Testis (tissue), 5 donors: ENCODE measurements at regions of chr1 and their contacts with region 1.

Region 1: GRCh38 chr1:197733324-197733723 is 42.0 kb downstream of the DENND1B start:
- DNase-seq: no peak
- H3K4me3 ChIP-seq: no peak overlapping the region
- H3K27ac ChIP-seq: no peak overlapping the region
- H3K4me1 ChIP-seq: no peaks in the 10 kb centered on the region
- H3K27me3 ChIP-seq: no peaks in the 10 kb centered on the region
- CTCF ChIP-seq: no peak
- POLR2A ChIP-seq: no peak

Region 2: GRCh38 chr1:196677781-196678509 is 1055.4 kb before region 1 on chr1:
- intact Hi-C with region 1: no loop called
- DNase-seq: no peak
- H3K4me3 ChIP-seq: no peak overlapping the region
- H3K27ac ChIP-seq: no peak overlapping the region
- H3K4me1 ChIP-seq: no peaks in the 10 kb centered on the region
- H3K27me3 ChIP-seq: no peaks in the 10 kb centered on the region
- CTCF ChIP-seq: no peak
- POLR2A ChIP-seq: no peak

Region 3: GRCh38 chr1:197683895-197684553 is 49.3 kb before region 1 on chr1:
- intact Hi-C with region 1: loop called (anchors 5 kb)
- DNase-seq: no peak
- H3K4me3 ChIP-seq: no peak overlapping the region
- H3K27ac ChIP-seq: no peak overlapping the region
- H3K4me1 ChIP-seq: no peaks in the 10 kb centered on the region
- H3K27me3 ChIP-seq: no peaks in the 10 kb centered on the region
- CTCF ChIP-seq: no peak
- POLR2A ChIP-seq: no peak